Right ventricle myocardium superior (tissue), 1 donor: ENCODE measurements at regions of chr7 and their contacts with region 1.

Region 1: DNA sequence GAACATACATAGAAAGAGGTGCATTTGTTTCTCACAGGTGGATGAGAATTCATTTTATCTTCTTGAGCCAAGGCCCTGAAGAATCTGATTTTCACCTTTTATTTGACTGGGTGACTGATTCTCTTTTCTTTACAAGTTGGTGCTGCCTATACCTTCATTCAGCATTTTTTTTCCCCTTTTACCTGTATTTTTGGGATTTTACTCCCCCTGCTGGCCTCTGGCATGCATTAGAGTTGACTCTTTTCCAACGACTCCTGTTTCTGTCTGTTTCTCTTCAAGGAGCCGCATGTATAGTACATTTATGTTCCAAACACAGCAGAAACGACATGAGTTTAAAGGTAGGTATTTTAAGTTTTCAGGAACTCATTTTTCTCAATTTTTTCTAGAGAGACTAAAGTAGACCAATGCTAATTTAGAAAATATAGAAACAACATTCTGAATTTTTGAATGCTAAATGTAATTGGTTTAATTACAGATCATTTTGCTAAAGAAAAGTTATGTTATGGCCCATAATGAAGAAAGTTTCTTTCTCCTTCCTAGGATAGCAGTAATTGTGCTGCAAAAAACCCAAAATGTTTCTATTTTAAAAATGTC is 149.8 kb upstream of the HDAC9 start:
- DNase-seq: no peak
- ATAC-seq: peak; percentile 55

Region 2: GRCh38 chr7:17680943-17681351 is 664.8 kb before region 1 on chr7:
- intact Hi-C with region 1: loop called (anchors 10 kb)
- DNase-seq: no peak
- ATAC-seq: peak; percentile 57

Region 3: GRCh38 chr7:17706734-17707133 is 639.0 kb before region 1 on chr7:
- intact Hi-C with region 1: loop called (anchors 5 kb)
- DNase-seq: no peak
- ATAC-seq: peak; percentile 89

Region 4: DNA sequence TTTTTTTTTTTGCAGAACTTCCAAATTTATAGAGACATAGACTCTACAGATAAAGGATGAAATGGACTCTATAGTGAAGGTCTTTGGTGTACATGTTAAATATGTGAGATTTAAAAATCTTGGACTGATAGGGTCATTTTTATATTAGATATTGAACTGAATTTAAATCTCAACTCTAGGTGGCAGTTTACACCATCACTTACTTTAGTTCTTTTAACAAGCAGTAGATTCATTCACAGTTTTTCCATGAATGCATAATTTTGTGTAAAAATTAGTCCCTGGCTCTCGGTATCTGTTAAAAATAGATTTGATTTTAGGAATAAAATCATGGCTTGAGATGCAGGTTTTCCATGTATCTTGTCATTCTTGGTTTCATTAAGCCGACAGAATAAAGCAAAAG is 374.3 kb before region 1 on chr7:
- intact Hi-C with region 1: loop called (anchors 5 kb)
- DNase-seq: no peak
- ATAC-seq: no peak